ENCODE measurements at regions of chr5 and their contacts with region 1.

Region 1: DNA sequence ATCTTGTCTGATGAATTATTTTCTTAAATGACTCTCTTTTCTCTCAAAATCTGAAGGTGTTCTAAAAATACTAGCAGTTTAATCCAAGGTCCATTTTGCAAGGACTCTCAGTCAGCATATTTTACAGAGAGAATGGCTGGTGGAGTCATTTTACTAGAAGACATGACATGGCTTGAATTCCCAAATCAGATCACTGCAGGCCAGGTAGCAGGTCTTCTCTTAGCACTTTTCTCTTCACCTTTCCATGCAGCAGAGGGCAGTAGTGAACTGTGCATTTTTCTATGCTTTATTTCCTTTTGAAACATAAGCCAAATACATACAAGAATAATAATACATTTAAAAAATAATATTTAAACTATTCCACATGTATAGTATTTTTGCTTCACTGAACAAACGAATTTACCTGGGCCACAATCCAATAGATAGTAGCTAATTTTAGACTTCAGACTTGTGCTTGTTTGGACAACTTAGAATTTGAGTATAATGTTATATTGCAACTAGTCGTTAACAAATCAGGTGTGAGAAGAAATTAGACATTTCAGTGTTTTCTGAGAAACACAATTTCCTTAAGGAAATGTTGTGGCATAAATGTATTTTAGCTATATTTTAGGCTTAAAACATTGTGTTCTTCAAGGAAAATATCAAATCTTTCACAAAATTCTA is 289.4 kb upstream of the DAB2 start:
- DNase-seq: peak; percentile 61
- H3K4me3 Mint-ChIP-seq: no peak overlapping the region
- H3K27ac Mint-ChIP-seq: no peak overlapping the region
- H3K4me1 Mint-ChIP-seq: peaks cover 31% of the 10 kb centered on the region
- H3K27me3 Mint-ChIP-seq: no peaks in the 10 kb centered on the region
- CTCF ChIP-seq: peak; percentile 52

Region 2: DNA sequence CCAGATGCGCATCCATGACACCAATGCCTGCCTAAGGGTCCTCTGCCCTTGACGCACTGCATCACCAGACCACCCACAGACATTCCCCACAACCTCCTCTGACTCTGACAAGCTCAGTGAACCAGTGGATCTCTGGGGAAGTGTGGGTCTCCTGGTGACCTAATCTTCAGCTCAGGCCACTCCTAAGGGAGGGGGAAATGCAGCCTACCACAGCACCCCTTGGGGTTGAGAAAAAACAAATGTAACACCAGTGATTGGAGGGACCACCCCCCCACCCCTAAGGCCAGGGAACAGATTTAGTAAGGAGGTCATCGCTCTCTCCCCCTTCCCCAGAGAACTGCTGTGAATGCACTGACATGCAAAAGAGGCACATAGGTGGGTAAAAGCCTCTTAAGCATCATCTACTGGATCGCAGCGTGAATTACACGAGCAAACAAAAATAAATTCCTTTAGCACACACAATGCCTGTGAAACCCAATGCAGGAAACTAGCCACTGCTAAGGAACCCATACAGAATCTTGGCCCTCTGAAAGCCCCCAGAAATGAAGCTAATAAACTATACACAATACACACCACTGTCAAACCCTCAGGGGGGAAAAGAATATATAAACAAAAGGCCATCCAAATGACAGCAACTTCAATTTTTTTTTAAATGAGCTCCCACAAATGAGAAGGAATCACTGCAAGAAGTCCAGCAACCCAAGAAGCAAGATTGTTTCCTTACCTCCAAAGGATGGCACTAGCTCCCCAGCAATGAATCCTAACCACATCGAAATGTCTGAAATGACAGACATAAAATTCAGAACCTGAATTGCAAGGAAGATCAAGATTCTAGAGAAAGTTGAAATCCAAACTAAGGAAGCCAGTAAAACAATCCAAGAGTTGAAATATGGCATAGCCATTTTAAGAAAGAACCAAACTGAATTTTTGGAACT is 451.9 kb after region 1 on chr5:
- CTCF ChIA-PET with region 1: no interaction called
- intact Hi-C with region 1: loop called (anchors 10 kb)
- DNase-seq: no peak
- H3K4me3 Mint-ChIP-seq: no peak overlapping the region
- H3K27ac Mint-ChIP-seq: no peak overlapping the region
- H3K4me1 Mint-ChIP-seq: peaks cover 14% of the 10 kb centered on the region
- H3K27me3 Mint-ChIP-seq: no peaks in the 10 kb centered on the region
- CTCF ChIP-seq: no peak

Measured in Calu3 (cell line).